Right ventricle myocardium inferior (tissue), 1 donor: ENCODE measurements at regions of chr5 and their contacts with region 1.

Region 1: DNA sequence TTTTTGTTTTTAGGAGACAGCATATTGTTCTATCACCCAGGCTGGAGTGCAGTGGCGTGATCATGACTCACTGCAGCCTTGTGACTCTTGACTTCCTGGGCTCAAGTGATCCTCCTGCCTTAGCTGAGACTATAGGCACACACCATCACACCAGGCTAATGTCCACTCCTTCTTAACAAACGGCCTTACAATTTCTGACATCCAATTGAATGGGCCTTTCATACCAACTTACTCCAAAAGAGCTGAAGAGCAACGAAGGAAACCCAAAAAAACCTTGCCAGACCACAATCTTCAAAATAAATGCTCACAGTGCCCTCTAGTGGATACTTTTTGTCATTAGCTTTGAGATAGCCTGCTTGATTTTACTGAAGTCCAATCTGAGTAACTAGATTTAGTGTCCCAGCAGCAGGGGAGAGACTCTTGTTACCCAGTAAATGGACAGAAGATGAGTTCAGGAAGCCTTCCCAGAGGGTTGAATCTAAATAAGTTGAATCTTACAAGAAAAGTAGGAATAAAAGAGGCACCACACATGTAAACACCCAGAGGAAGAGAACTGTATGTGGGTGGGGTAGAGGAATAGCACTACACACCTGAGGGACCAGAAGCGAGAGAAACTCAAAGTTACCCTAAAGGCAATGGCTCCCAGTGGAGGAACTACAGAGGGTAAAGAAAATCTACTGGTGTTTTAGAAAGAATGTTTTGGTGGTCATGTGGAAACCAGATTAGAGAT is 9.3 kb downstream of the ZNF622 start:
- DNase-seq: no peak
- ATAC-seq: peak; percentile 21

Region 2: GRCh38 chr5:16013334-16014065 is 442.8 kb before region 1 on chr5:
- intact Hi-C with region 1: loop called (anchors 5 kb)
- DNase-seq: no peak
- ATAC-seq: no peak

Region 3: GRCh38 chr5:16178745-16179372 is 277.4 kb before region 1 on chr5:
- intact Hi-C with region 1: loop called (anchors 5 kb)
- DNase-seq: peak; percentile 78
- ATAC-seq: peak; percentile 93

Region 4: GRCh38 chr5:16345454-16345853 is 110.8 kb before region 1 on chr5:
- intact Hi-C with region 1: loop called (anchors 5 kb)
- DNase-seq: no peak
- ATAC-seq: no peak

Region 5: DNA sequence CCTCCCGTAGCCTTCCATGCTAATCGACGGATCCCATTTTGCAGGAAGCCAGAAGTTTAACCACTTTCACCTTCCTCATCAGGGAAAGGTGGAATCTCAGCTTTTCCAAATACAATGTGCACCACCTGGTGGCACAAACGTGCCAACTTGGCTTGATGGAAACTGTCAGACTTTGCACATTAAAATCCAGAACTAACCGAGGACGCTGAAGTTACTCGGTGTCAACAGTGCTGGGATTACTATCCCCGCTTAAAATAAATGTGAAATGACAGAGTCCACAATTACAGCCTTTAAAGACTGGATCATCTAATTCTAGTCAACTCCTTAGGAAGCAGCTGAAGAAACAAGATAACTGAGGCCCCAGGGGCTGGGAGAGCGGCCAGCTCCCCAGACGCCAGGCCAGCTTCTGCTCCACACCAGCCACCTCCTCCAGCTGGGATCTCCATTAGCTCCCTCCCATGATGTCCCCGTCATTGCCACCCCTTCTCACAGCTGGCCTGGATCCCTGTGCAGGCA is 210.7 kb after region 1 on chr5:
- intact Hi-C with region 1: loop called (anchors 5 kb)
- DNase-seq: peak; percentile 77
- ATAC-seq: peak; percentile 87